Gastrocnemius medialis (tissue), 4 donors: ENCODE measurements at regions of chr19 and their contacts with region 1.

Region 1: DNA sequence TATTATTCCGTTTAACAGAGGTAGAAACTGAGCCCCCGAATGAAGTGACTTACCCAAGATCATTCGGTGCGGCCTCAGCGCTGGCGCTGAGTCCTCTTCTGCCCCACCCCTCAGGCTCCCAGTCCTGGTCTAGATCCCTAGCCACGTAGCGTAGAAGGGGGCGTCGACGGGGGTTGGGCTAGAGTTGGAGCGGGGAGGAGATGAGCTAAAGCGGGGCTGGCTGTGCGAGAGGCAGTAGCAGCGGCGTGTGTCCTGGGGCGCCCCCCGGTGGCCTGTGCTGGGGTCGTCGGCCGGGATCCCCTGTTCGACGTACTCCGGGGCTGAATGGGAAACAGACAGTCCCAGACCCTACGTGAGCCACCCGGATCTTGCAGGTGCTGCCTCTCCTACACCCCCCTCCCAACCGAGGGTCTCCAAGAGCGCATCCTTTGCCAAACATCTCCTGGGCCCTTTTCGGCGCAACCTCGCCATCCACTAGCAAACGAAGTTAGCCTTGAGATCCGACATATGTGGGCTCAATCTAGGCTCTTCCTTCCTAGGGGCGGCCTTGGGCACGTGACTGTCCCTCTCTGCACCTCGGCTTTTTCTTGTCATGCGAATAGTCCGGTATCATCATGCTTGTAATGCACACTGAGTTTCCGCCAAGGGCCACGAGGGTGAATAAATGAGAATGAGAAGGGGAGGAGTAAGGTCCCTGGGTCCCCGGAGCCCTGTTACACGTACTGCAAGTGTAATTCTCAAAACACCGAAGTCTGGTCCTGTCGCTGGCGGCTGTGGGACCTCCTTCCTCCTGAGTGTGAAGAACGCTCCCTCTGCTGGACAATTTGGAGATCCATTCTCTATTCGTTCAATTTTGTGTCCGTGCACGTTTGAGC is 47.7 kb downstream of the CYP4F22 start:
- DNase-seq: peak; percentile 76 to 80
- ATAC-seq: peak; percentile 87
- H3K4me3 ChIP-seq: peak overlapping the region; percentile 27 to 46 (median 40)
- H3K27ac ChIP-seq: peak overlapping the region in 3 of 4 donors; percentile 19 to 34 (median 25)
- H3K4me1 ChIP-seq: peaks cover 4 to 12% of the 10 kb centered on the region in 2 donors
- H3K27me3 ChIP-seq: peaks cover 12 to 25% (median 17%) of the 10 kb centered on the region in 3 donors
- CTCF ChIP-seq: peak; percentile 56 to 82 (median 74)
- POLR2A ChIP-seq: peak in 1 of 2 donors; percentile 37

Region 2: GRCh38 chr19:15091901-15092753 is 463.9 kb before region 1 on chr19:
- in situ Hi-C with region 1: loop called (anchors 10 to 25 kb)
- intact Hi-C with region 1: loop called (anchors 5 kb)
- DNase-seq: no peak
- ATAC-seq: peak in 1 of 2 donors; percentile 54
- H3K4me3 ChIP-seq: peak overlapping the region in 1 of 4 donors; percentile 6
- H3K27ac ChIP-seq: no peak overlapping the region
- H3K4me1 ChIP-seq: no peaks in the 10 kb centered on the region
- H3K27me3 ChIP-seq: peaks cover 0 to 7% (median 0%) of the 10 kb centered on the region in 3 donors
- CTCF ChIP-seq: peak; percentile 34 to 80 (median 61)
- POLR2A ChIP-seq: no peak

Region 3: GRCh38 chr19:15264061-15264932 is 291.7 kb before region 1 on chr19:
- in situ Hi-C with region 1: loop called in 1 of 4 experiments (anchors 10 kb)
- intact Hi-C with region 1: no loop called
- DNase-seq: peak in 1 of 2 donors; percentile 65
- ATAC-seq: peak; percentile 14 to 31
- H3K4me3 ChIP-seq: no peak overlapping the region
- H3K27ac ChIP-seq: peak overlapping the region; percentile 61 to 80 (median 68)
- H3K4me1 ChIP-seq: peaks cover 50 to 54% of the 10 kb centered on the region in 2 donors
- H3K27me3 ChIP-seq: no peaks in the 10 kb centered on the region
- CTCF ChIP-seq: peak; percentile 68 to 88 (median 78)
- POLR2A ChIP-seq: no peak

Region 4: GRCh38 chr19:15449620-15450527 is 106.1 kb before region 1 on chr19 and contains the start of gene WIZ:
- in situ Hi-C with region 1: loop called in 2 of 4 experiments (anchors 10 to 25 kb)
- intact Hi-C with region 1: no loop called
- DNase-seq: peak; percentile 59 to 84
- ATAC-seq: peak; percentile 32 to 34
- H3K4me3 ChIP-seq: peak within 1 kb of the TSS; percentile 69 to 84 (median 79)
- H3K27ac ChIP-seq: peak within 1 kb of the TSS; percentile 87 to 99 (median 98)
- H3K4me1 ChIP-seq: peaks cover 30% of the 10 kb centered on the region in 2 donors
- H3K27me3 ChIP-seq: peaks cover 0 to under 1% (median 0%) of the 10 kb centered on the region in 3 donors
- CTCF ChIP-seq: no peak
- POLR2A ChIP-seq: peak; percentile 64 to 67
- total RNA-seq, gene WIZ: 28.0 to 40.6 (median 32.5) TPM

Region 5: DNA sequence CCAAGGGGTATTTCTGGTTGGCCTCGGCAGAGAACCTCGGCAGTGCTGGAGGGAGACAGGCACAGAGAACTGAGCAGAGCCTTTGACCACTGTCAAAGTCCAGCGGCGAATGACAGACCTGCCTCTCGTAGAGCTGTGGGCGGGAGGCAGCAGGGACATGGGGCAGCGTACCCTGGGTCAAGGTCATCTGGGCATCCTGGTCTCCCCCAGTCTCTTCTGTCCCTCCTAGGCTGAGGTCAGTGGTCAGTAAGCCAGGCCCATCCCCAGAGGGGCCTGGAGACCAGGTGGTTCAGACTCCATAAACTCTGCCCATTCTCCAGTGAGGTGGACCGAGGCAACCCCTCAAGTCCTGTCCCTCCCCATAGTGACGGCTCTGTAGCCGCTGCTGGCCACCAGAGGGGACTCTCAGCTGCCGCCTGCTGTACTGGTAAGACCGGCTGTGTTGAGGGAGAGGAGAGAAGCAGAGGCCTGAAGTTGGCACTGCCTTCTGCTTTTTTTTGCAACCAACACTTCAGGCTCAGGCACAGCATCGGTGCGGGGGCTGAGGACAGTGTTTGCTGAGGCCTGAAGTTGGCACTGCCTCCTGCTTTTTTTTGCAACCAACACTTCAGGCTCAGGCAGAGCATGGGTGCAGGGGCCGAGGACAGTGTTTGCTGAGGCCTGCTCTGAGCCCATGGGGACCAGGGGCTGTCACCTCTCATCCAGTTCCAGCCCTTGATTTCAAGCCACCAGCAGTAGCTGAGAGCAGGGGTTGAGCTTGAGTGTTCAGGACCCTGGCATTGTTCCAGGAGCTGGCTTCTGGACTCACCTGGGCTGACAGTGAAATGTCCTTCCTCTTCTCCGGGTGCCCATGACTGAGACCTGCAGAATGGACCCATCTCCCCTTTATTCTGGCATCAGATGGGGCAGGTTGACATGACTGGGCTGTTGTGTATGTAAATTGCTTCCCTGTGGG is 76.3 kb before region 1 on chr19 and contains the start of gene PGLYRP2:
- in situ Hi-C with region 1: loop called in 2 of 4 experiments (anchors 10 to 25 kb)
- intact Hi-C with region 1: no loop called
- DNase-seq: no peak
- ATAC-seq: no peak
- H3K4me3 ChIP-seq: no peak within 1 kb of the TSS
- H3K27ac ChIP-seq: no peak within 1 kb of the TSS
- H3K4me1 ChIP-seq: no peaks in the 10 kb centered on the region
- H3K27me3 ChIP-seq: no peaks in the 10 kb centered on the region
- CTCF ChIP-seq: peak in 2 of 5 experiments; percentile 28 to 30
- POLR2A ChIP-seq: no peak
- total RNA-seq, gene PGLYRP2: not detected

Region 6: DNA sequence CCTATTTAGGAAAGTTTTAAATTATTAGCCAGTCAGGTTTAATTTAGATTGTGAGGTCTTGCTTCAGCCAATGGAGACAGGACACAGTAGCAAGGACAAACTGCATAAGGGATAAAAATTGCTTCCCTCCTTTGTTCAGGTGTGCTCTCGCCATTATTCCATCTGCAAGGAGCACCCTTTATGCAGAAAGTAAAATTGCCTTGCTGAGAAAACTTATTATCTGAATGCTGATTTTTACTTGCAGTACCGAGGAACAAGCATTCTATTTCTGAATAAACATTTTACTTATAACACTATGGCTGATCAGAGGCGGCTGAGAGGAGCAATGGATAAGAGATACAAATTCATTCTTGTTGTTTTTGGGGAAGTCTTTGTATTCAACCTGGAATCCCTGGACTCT is 39.6 kb before region 1 on chr19:
- in situ Hi-C with region 1: no loop called
- intact Hi-C with region 1: no loop called
- DNase-seq: no peak
- ATAC-seq: no peak
- H3K4me3 ChIP-seq: no peak overlapping the region
- H3K27ac ChIP-seq: no peak overlapping the region
- H3K4me1 ChIP-seq: no peaks in the 10 kb centered on the region
- H3K27me3 ChIP-seq: no peaks in the 10 kb centered on the region
- CTCF ChIP-seq: no peak
- POLR2A ChIP-seq: no peak